ENCODE measurements at regions of chr7 and their contacts with region 1.

Region 1: GRCh38 chr7:158353606-158354570 is 233.7 kb downstream of the PTPRN2 start:
- DNase-seq: peak; percentile 61
- ATAC-seq: peak; percentile 71
- H3K4me3 ChIP-seq: no peak overlapping the region
- H3K27ac ChIP-seq: no peak overlapping the region
- H3K4me1 ChIP-seq: no peaks in the 10 kb centered on the region
- H3K27me3 ChIP-seq: 0 out of 2 replicates have a peak, but pooled peaks cover 4% of the 10 kb centered on the region
- CTCF ChIP-seq: peak; percentile 82

Region 2: GRCh38 chr7:158407581-158408317 is 53.9 kb after region 1 on chr7:
- CTCF ChIA-PET with region 1: no interaction called
- POLR2A ChIA-PET with region 1: no interaction called
- intact Hi-C with region 1: loop called (anchors 1 kb)
- DNase-seq: peak; percentile 71
- ATAC-seq: peak; percentile 87
- H3K4me3 ChIP-seq: no peak overlapping the region
- H3K27ac ChIP-seq: no peak overlapping the region
- H3K4me1 ChIP-seq: no peaks in the 10 kb centered on the region
- H3K27me3 ChIP-seq: peaks cover 27% of the 10 kb centered on the region
- CTCF ChIP-seq: peak; percentile 72

Measured in PC-3 (cell line).